HepG2 (cell line): ENCODE measurements at regions of chr17 and their contacts with region 1.

Region 1: GRCh38 chr17:40303009-40303657 is 5.8 kb upstream of the RARA start:
- DNase-seq: peak; percentile 64
- ATAC-seq: peak; percentile 12; the same call in 1 of the 3 replicates
- H3K4me3 ChIP-seq: no peak overlapping the region
- H3K27ac ChIP-seq: no peak overlapping the region
- H3K4me1 ChIP-seq: peaks cover 21% of the 10 kb centered on the region
- H3K27me3 ChIP-seq: no peaks in the 10 kb centered on the region
- CTCF ChIP-seq: peak; percentile 87
- EP300 ChIP-seq: no peak
- POLR2A ChIP-seq: no peak; a peak in 1 of 4 replicates
- RAD21 ChIP-seq: peak; percentile 83

Region 2: GRCh38 chr17:40317880-40318829 is 15.0 kb after region 1 on chr17:
- CTCF ChIA-PET with region 1: interaction called, 4 read pairs
- POLR2A ChIA-PET with region 1: interaction called, 33 read pairs
- in situ Hi-C with region 1: no loop called
- intact Hi-C with region 1: loop called (anchors 2 kb)
- DNase-seq: peak; percentile 91
- ATAC-seq: peak; percentile 90
- H3K4me3 ChIP-seq: peak overlapping the region; percentile 86 to 95 (median 86)
- H3K27ac ChIP-seq: peak overlapping the region; percentile 29
- H3K4me1 ChIP-seq: peaks cover 89% of the 10 kb centered on the region
- H3K27me3 ChIP-seq: no peaks in the 10 kb centered on the region; a peak in 1 of 5 replicates
- CTCF ChIP-seq: no peak; the same call in 1 of the 2 replicates
- EP300 ChIP-seq: no peak
- POLR2A ChIP-seq: peak; percentile 66 to 88
- RAD21 ChIP-seq: no peak

Region 3: GRCh38 chr17:40355123-40355803 is 52.1 kb after region 1 on chr17:
- CTCF ChIA-PET with region 1: interaction called, 157 read pairs
- POLR2A ChIA-PET with region 1: interaction called, 6 read pairs
- in situ Hi-C with region 1: no loop called
- intact Hi-C with region 1: loop called (anchors 1 kb)
- DNase-seq: peak; percentile 58
- ATAC-seq: peak; percentile 74
- H3K4me3 ChIP-seq: no peak overlapping the region
- H3K27ac ChIP-seq: no peak overlapping the region
- H3K4me1 ChIP-seq: peaks cover 55% of the 10 kb centered on the region
- H3K27me3 ChIP-seq: no peaks in the 10 kb centered on the region; a peak in 1 of 5 replicates
- CTCF ChIP-seq: peak; percentile 100
- EP300 ChIP-seq: peak in 1 of 2 experiments; percentile 46; a peak in 1 of 4 replicates
- POLR2A ChIP-seq: no peak
- RAD21 ChIP-seq: peak; percentile 100

Region 4: DNA sequence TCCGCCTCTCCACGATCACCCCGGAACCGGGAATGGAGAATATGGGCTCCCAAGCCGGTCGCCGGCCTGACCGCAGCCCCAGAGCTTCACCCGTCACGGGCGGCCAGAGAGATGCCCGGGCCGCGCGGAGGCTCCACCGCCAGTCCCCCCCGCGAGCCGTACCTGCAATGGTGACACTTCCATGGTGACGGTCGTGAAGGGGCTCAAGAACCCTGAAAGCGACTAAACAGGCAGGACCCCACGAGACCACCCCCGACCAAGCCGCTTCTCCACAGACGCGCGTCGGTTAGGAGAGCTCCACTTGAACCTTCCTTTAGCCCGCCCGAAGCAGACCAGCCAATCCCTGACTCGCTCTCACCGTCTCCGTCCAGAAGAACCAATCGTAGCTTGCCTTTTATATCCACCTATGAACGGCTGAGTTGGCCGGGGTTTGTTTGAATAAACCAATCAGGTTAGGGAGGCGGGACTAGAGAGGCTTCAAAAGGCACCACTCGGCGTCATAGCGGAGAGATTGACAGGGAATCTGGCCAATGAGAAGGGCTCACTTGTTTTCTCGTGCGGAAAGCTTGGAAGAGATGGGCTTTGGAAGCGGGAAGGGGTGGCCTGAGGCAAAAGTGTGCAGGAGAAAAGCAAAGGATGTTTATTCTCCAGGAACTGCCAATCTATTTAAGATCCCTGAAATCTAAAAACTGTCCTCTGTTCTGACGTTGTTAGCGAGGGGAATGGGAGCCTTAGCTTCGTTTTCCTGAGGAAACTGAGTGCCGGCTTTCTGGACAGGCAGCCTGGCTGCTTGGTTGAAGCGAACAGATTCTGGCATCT is 114.7 kb after region 1 on chr17 and contains the start of gene TOP2A:
- CTCF ChIA-PET with region 1: no interaction called
- POLR2A ChIA-PET with region 1: no interaction called
- in situ Hi-C with region 1: no loop called
- intact Hi-C with region 1: loop called (anchors 5 kb)
- DNase-seq: peak; percentile 100
- ATAC-seq: peak; percentile 90
- H3K4me3 ChIP-seq: peak within 1 kb of the TSS; percentile 89 to 98 (median 96)
- H3K27ac ChIP-seq: peak within 1 kb of the TSS; percentile 82
- H3K4me1 ChIP-seq: peaks cover 79% of the 10 kb centered on the region
- H3K27me3 ChIP-seq: no peaks in the 10 kb centered on the region
- CTCF ChIP-seq: no peak
- EP300 ChIP-seq: 0 out of 4 replicates have a peak, but pooled peaks of 1 of the 2 experiments have one; percentile 12
- POLR2A ChIP-seq: peak; percentile 92 to 93
- RAD21 ChIP-seq: no peak; the same call in 1 of the 2 replicates
- total RNA-seq, gene TOP2A: 327 and 614 TPM in 2 replicates